CD8-positive, alpha-beta T cell (primary cell): ENCODE measurements at regions of chr6 and their contacts with region 1.

Region 1: GRCh38 chr6:53335208-53335994 is 13.3 kb downstream of the ELOVL5 start:
- DNase-seq: peak; percentile 52 to 94 (median 76)
- ATAC-seq: peak; percentile 83
- H3K4me3 ChIP-seq: peak overlapping the region; percentile 38 to 54
- H3K4me3 Mint-ChIP-seq: peak overlapping the region; percentile 84
- H3K27ac ChIP-seq: peak overlapping the region; percentile 82 to 98
- H3K27ac Mint-ChIP-seq: peak overlapping the region; percentile 98
- H3K4me1 ChIP-seq: peaks cover 76% of the 10 kb centered on the region
- H3K4me1 Mint-ChIP-seq: peaks cover 91% of the 10 kb centered on the region
- H3K27me3 ChIP-seq: no peaks in the 10 kb centered on the region
- H3K27me3 Mint-ChIP-seq: no peaks in the 10 kb centered on the region
- CTCF ChIP-seq: no peak

Region 2: DNA sequence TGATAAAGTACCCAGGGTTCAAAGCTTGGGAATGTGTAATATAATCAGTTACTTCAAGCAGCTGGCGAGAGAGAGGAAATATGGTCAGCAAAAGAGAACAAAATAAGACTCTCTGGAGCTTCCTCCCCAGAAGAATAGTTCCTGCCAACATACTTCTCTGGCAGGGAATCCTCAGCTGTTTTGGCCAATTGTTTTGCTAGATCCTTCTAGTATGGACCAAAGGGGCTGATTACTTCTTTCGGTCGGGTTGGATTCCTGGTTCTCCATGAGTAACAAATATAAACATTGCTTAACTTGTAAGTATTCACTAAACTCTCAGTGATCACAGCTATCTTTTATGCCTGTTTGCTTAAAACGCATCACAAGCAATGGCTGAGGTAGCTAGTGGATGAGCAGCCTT is 301.6 kb before region 1 on chr6:
- CTCF ChIA-PET with region 1: no interaction called
- POLR2A ChIA-PET with region 1: no interaction called
- intact Hi-C with region 1: no loop called
- DNase-seq: no peak
- ATAC-seq: no peak
- H3K4me3 ChIP-seq: no peak overlapping the region
- H3K4me3 Mint-ChIP-seq: no peak overlapping the region
- H3K27ac ChIP-seq: no peak overlapping the region
- H3K27ac Mint-ChIP-seq: no peak overlapping the region
- H3K4me1 ChIP-seq: no peaks in the 10 kb centered on the region
- H3K4me1 Mint-ChIP-seq: no peaks in the 10 kb centered on the region
- H3K27me3 ChIP-seq: no peaks in the 10 kb centered on the region
- H3K27me3 Mint-ChIP-seq: no peaks in the 10 kb centered on the region
- CTCF ChIP-seq: no peak

Region 3: GRCh38 chr6:53064726-53065215 is 270.6 kb before region 1 on chr6:
- CTCF ChIA-PET with region 1: no interaction called
- POLR2A ChIA-PET with region 1: no interaction called
- intact Hi-C with region 1: loop called in 1 of 2 experiments (anchors 5 kb)
- DNase-seq: peak; percentile 90 to 98 (median 96)
- ATAC-seq: peak; percentile 83
- H3K4me3 ChIP-seq: peak overlapping the region; percentile 79 to 83
- H3K4me3 Mint-ChIP-seq: peak overlapping the region; percentile 100
- H3K27ac ChIP-seq: peak overlapping the region; percentile 55 to 81
- H3K27ac Mint-ChIP-seq: peak overlapping the region; percentile 98
- H3K4me1 ChIP-seq: peaks cover 39% of the 10 kb centered on the region
- H3K4me1 Mint-ChIP-seq: peaks cover 60% of the 10 kb centered on the region
- H3K27me3 ChIP-seq: no peaks in the 10 kb centered on the region
- H3K27me3 Mint-ChIP-seq: no peaks in the 10 kb centered on the region
- CTCF ChIP-seq: no peak

Region 4: DNA sequence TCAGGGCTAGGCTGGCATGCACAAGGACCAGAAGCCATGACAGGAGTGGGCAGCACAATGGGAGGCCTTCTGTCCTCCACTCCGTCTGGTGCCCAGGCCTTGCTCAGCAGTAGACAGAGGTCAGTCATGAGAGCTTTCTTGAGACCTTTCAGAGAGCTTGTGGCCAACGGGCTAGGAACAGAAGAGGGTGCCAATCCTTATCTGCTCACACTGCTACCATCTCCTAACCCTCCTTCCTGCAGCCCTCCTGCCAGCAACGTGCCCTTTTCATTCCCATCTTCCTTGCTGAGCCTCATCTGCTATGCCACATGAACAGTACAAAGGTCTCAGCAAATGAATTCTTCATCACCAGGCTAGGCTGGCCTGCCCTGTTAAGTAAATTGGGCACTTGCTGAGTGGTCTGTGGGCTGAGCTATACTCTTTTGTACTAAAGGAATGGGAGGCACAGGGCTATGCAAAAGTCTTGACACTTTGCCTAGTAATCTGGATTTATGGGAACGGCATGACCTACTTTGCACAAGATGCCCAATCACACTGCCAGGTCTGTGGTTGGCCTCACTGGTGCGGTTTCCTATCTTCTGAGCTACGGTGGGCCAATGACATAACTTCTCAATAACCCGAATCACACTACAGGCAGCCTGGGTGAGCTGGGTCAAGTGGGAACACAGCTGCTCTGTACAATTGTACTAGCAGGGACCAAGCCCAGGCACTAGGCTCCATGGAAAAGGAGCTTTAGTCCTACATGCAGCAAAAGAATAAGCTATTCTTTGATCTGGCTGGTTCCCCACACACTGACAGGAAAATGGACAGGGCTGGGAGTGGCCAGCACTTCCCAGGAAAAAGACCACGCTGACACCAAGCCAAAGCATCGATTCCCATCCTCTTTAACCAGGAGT is 34.5 kb before region 1 on chr6:
- CTCF ChIA-PET with region 1: interaction called, 4 read pairs
- POLR2A ChIA-PET with region 1: interaction called, 12 read pairs
- intact Hi-C with region 1: loop called (anchors 1 to 5 kb)
- DNase-seq: peak in 5 of 9 experiments; percentile 29 to 72 (median 44)
- ATAC-seq: peak; percentile 22
- H3K4me3 ChIP-seq: no peak overlapping the region
- H3K4me3 Mint-ChIP-seq: peak overlapping the region; percentile 49
- H3K27ac ChIP-seq: no peak overlapping the region
- H3K27ac Mint-ChIP-seq: peak overlapping the region; percentile 89
- H3K4me1 ChIP-seq: peaks cover 39% of the 10 kb centered on the region
- H3K4me1 Mint-ChIP-seq: peaks cover 77% of the 10 kb centered on the region
- H3K27me3 ChIP-seq: no peaks in the 10 kb centered on the region
- H3K27me3 Mint-ChIP-seq: no peaks in the 10 kb centered on the region
- CTCF ChIP-seq: no peak

Region 5: GRCh38 chr6:53309059-53309900 is 26.1 kb before region 1 on chr6:
- CTCF ChIA-PET with region 1: interaction called, 3 read pairs
- POLR2A ChIA-PET with region 1: interaction called, 6 read pairs
- intact Hi-C with region 1: loop called (anchors 2 kb)
- DNase-seq: peak in 6 of 9 experiments; percentile 26 to 62 (median 34)
- ATAC-seq: peak; percentile 53
- H3K4me3 ChIP-seq: no peak overlapping the region
- H3K4me3 Mint-ChIP-seq: no peak overlapping the region
- H3K27ac ChIP-seq: peak overlapping the region in 1 of 2 experiments; percentile 38
- H3K27ac Mint-ChIP-seq: peak overlapping the region; percentile 45
- H3K4me1 ChIP-seq: peaks cover 53% of the 10 kb centered on the region
- H3K4me1 Mint-ChIP-seq: peaks cover 81% of the 10 kb centered on the region
- H3K27me3 ChIP-seq: no peaks in the 10 kb centered on the region
- H3K27me3 Mint-ChIP-seq: no peaks in the 10 kb centered on the region
- CTCF ChIP-seq: no peak

Region 6: GRCh38 chr6:53359072-53359842 is 23.9 kb after region 1 on chr6:
- CTCF ChIA-PET with region 1: interaction called, 5 read pairs
- POLR2A ChIA-PET with region 1: interaction called, 4 read pairs
- intact Hi-C with region 1: loop called in 1 of 2 experiments (anchors 1 kb)
- DNase-seq: peak; percentile 79 to 95 (median 86)
- ATAC-seq: peak; percentile 76
- H3K4me3 ChIP-seq: peak overlapping the region; percentile 67 to 72
- H3K4me3 Mint-ChIP-seq: peak overlapping the region; percentile 88
- H3K27ac ChIP-seq: peak overlapping the region; percentile 83 to 96
- H3K27ac Mint-ChIP-seq: peak overlapping the region; percentile 96
- H3K4me1 ChIP-seq: peaks cover 38% of the 10 kb centered on the region
- H3K4me1 Mint-ChIP-seq: peaks cover 43% of the 10 kb centered on the region
- H3K27me3 ChIP-seq: no peaks in the 10 kb centered on the region
- H3K27me3 Mint-ChIP-seq: no peaks in the 10 kb centered on the region
- CTCF ChIP-seq: no peak

Region 7: GRCh38 chr6:53375847-53376246 is 40.4 kb after region 1 on chr6:
- CTCF ChIA-PET with region 1: no interaction called
- POLR2A ChIA-PET with region 1: no interaction called
- intact Hi-C with region 1: no loop called
- DNase-seq: no peak
- ATAC-seq: no peak
- H3K4me3 ChIP-seq: no peak overlapping the region
- H3K4me3 Mint-ChIP-seq: no peak overlapping the region
- H3K27ac ChIP-seq: no peak overlapping the region
- H3K27ac Mint-ChIP-seq: no peak overlapping the region
- H3K4me1 ChIP-seq: no peaks in the 10 kb centered on the region
- H3K4me1 Mint-ChIP-seq: no peaks in the 10 kb centered on the region
- H3K27me3 ChIP-seq: no peaks in the 10 kb centered on the region
- H3K27me3 Mint-ChIP-seq: no peaks in the 10 kb centered on the region
- CTCF ChIP-seq: no peak